ENCODE measurements at regions of chr2 and their contacts with region 1.

Region 1: DNA sequence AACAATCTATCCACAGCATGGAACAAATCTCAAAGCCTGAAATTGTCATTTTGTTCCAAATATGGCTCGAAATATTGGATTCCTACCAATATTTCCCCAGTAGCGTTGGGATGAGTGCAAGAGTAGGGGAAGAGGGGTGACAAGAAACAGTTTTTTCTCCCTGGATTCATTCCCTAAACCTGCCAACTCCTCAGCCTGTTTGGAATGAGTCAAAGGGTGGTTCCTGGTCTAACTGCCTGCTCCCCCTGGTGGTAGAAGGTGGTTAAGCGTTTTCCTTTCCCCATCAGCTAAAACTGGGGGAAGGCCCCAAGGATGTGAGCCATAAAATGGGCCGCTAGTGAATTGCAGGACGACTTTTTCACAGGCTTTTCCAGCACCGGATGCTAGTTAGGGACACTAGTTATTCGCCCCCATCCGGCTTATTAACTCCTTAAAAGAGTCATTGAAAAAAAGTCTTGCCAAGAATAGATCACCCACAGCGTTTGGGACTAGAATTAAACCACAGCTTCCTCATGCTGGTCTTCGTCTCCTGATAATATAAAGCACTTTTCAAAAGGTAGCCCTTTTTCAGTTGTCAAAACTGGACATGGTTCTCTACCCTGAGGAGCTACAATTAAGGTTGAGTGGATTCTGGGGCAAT is 72.5 kb downstream of the DHRS9 start:
- DNase-seq: peak; percentile 46 to 64
- ATAC-seq: peak; percentile 85 to 97
- H3K4me3 ChIP-seq: no peak overlapping the region
- H3K27ac ChIP-seq: no peak overlapping the region
- H3K4me1 ChIP-seq: no peaks in the 10 kb centered on the region
- CTCF ChIP-seq: peak; percentile 67
- EP300 ChIP-seq: no peak
- POLR2A ChIP-seq: no peak
- RAD21 ChIP-seq: peak; percentile 53 to 59

Region 2: GRCh38 chr2:169119126-169119770 is 22.6 kb before region 1 on chr2:
- CTCF ChIA-PET with region 1: interaction called, 15 read pairs
- POLR2A ChIA-PET with region 1: no interaction called
- DNase-seq: no peak
- ATAC-seq: no peak
- H3K4me3 ChIP-seq: no peak overlapping the region
- H3K27ac ChIP-seq: no peak overlapping the region
- H3K4me1 ChIP-seq: no peaks in the 10 kb centered on the region
- CTCF ChIP-seq: no peak
- EP300 ChIP-seq: no peak
- POLR2A ChIP-seq: no peak
- RAD21 ChIP-seq: no peak